PC-3 (cell line): ENCODE measurements at regions of chr18 and their contacts with region 1.

Region 1: GRCh38 chr18:22152134-22152533 is 17.3 kb upstream of the GATA6 start:
- DNase-seq: no peak
- ATAC-seq: no peak
- H3K4me3 ChIP-seq: no peak overlapping the region
- H3K27ac ChIP-seq: no peak overlapping the region
- H3K4me1 ChIP-seq: no peaks in the 10 kb centered on the region
- H3K27me3 ChIP-seq: no peaks in the 10 kb centered on the region
- CTCF ChIP-seq: no peak

Region 2: DNA sequence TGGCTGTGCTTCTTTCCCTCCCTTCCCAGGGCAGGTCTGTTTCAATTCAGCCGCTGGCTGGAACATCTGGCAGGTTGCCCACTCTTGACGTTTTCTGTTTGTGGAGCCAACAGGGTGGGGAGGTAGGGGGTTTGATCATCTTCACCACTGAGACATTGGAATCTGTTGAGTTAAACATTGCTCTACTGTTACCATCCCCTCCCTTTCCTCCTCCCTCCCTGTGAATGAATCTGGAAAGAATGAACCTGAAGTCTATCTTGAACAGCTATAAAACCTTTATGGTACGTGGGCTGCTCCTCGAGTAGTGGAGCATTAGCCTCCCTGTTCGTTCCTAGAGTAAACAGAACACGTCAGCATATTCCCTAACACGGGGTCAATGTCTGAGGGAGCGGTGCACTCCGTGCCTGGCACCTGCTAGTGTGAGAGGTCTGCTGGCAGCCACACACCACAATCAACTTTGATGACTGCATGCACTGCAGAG is 531.1 kb after region 1 on chr18:
- CTCF ChIA-PET with region 1: no interaction called
- POLR2A ChIA-PET with region 1: no interaction called
- intact Hi-C with region 1: no loop called
- DNase-seq: peak; percentile 96
- ATAC-seq: peak; percentile 96
- H3K4me3 ChIP-seq: peak overlapping the region; percentile 19; the same call in 1 of the 2 replicates
- H3K27ac ChIP-seq: peak overlapping the region; percentile 76
- H3K4me1 ChIP-seq: peaks cover 27% of the 10 kb centered on the region
- H3K27me3 ChIP-seq: no peaks in the 10 kb centered on the region
- CTCF ChIP-seq: no peak

Region 3: DNA sequence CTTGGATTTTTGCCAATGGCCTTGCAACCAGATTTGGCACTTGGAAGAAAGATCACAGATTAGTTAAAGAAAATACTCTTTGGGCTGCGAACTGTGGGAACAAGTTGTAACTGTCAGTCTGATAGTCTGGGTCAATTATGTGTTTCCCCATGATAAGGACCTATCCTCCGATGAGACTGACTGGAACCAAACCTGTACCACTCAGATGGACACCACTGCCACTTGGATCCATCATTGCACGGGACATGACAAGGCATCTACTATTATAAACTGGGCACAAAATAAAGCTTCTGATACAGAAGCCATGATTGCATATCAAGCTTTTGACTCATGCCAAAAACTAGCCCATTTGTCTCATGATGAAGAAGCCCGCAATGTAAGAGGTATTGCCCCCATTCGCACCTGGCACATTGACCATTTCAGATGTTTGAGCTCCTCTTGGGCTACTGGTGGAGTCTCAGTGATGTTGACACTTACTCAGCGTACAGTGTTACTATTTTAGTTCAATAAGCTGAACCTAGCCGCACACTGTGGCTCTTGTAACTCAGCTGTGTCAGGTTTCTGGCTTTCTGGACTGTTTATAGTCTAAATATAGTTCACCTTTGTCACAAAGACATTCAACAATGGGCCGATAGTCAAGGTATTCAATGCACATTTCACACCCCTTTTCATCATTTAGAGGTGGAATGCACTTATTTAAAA is 601.1 kb after region 1 on chr18:
- CTCF ChIA-PET with region 1: no interaction called
- POLR2A ChIA-PET with region 1: interaction called, 16 read pairs
- intact Hi-C with region 1: no loop called
- DNase-seq: no peak
- ATAC-seq: no peak
- H3K4me3 ChIP-seq: no peak overlapping the region
- H3K27ac ChIP-seq: no peak overlapping the region
- H3K4me1 ChIP-seq: no peaks in the 10 kb centered on the region
- H3K27me3 ChIP-seq: no peaks in the 10 kb centered on the region
- CTCF ChIP-seq: no peak